ENCODE measurements at regions of chr10 and their contacts with region 1.

Region 1: DNA sequence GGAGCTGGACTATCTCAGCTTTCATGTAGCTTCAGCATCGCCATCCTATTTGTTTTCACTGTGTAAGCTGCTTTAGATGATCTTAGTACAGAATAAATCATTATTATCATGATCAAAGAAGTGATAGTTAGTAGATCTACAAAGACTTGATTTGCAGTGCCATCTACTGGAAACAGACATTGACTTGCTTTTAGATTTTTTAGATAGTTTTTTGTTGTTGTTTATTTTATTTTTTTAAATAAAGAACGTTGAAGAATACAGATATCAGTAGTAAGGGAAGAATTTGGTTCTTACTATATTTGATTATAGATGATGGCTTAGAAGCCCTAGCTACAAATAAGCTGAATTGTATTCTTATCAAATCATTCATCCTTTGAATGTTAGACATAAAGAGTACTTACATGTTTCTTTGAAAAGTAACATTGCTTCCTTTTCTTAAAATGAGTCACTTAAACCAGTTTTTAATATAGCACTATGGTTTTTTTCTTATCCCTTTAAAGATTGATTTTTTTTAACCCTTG is 6.3 kb upstream of the SFMBT2 start:
- DNase-seq: peak in 2 of 3 donors; percentile 32 to 55
- H3K4me3 ChIP-seq: no peak overlapping the region
- H3K4me3 Mint-ChIP-seq: no peak overlapping the region
- H3K27ac ChIP-seq: no peak overlapping the region
- H3K27ac Mint-ChIP-seq: no peak overlapping the region
- H3K4me1 ChIP-seq: peaks cover 9 to 12% of the 10 kb centered on the region in 2 donors
- H3K4me1 Mint-ChIP-seq: peaks cover 13% of the 10 kb centered on the region
- H3K27me3 ChIP-seq: peaks cover 13 to 25% of the 10 kb centered on the region in 2 donors
- H3K27me3 Mint-ChIP-seq: peaks cover 18 to 29% (median 21%) of the 10 kb centered on the region in 3 donors
- CTCF ChIP-seq: peak; percentile 77

Region 2: GRCh38 chr10:6918305-6918704 is 498.9 kb before region 1 on chr10:
- intact Hi-C with region 1: loop called in 1 of 2 experiments (anchors 5 kb)
- DNase-seq: peak; percentile 23 to 41 (median 35)
- H3K4me3 ChIP-seq: no peak overlapping the region
- H3K4me3 Mint-ChIP-seq: no peak overlapping the region
- H3K27ac ChIP-seq: no peak overlapping the region
- H3K27ac Mint-ChIP-seq: peak overlapping the region in 2 of 7 donors; percentile 15 to 27
- H3K4me1 ChIP-seq: peaks cover 23 to 25% of the 10 kb centered on the region in 2 donors
- H3K4me1 Mint-ChIP-seq: peaks cover 36% of the 10 kb centered on the region
- H3K27me3 ChIP-seq: no peaks in the 10 kb centered on the region
- H3K27me3 Mint-ChIP-seq: peaks cover 0 to 2% (median 0%) of the 10 kb centered on the region in 3 donors
- CTCF ChIP-seq: peak; percentile 68

Region 3: DNA sequence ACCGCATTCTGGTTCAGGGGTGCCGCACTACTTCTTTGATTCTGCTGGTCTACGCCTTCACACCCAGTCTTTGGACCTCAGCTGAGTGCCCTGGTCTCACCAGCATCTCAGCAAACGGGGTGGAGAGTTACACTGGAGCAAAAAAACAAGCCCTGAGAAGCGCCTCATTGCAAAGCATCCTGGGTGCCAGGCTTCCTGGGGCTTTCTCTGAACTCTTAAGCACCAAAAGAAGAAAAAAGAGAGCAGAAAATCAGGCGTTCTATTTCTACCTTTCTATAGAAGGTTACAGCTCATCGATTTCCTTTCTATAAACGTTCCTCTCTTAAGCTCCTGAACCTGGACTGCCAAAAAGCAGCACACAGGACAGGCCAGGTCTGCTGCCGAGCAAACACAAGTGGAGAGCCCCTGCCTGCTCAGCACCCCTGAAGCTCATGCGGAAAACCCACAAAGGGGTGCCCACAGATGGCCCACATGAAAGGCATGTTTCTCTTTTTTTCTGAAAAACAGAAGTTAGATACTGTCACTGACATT is 224.3 kb before region 1 on chr10:
- intact Hi-C with region 1: loop called in 1 of 2 experiments (anchors 5 kb)
- DNase-seq: peak in 1 of 3 donors; percentile 34
- H3K4me3 ChIP-seq: no peak overlapping the region
- H3K4me3 Mint-ChIP-seq: no peak overlapping the region
- H3K27ac ChIP-seq: peak overlapping the region in 1 of 2 donors; percentile 30
- H3K27ac Mint-ChIP-seq: peak overlapping the region in 3 of 7 donors; percentile 49 to 71 (median 60)
- H3K4me1 ChIP-seq: peaks cover 24 to 33% of the 10 kb centered on the region in 2 donors
- H3K4me1 Mint-ChIP-seq: peaks cover 41% of the 10 kb centered on the region
- H3K27me3 ChIP-seq: no peaks in the 10 kb centered on the region
- H3K27me3 Mint-ChIP-seq: no peaks in the 10 kb centered on the region
- CTCF ChIP-seq: no peak